Endothelial cell of umbilical vein (primary cell): ENCODE measurements at regions of chr12 and their contacts with region 1.

Region 1: GRCh38 chr12:19572920-19573558 is 133.7 kb downstream of the AEBP2 start:
- DNase-seq: peak; percentile 69
- H3K4me3 ChIP-seq: no peak overlapping the region
- H3K27ac ChIP-seq: peak overlapping the region; percentile 98
- H3K4me1 ChIP-seq: peaks cover 48% of the 10 kb centered on the region
- H3K27me3 ChIP-seq: no peaks in the 10 kb centered on the region
- CTCF ChIP-seq: peak; percentile 45 to 60
- POLR2A ChIP-seq: no peak

Region 2: DNA sequence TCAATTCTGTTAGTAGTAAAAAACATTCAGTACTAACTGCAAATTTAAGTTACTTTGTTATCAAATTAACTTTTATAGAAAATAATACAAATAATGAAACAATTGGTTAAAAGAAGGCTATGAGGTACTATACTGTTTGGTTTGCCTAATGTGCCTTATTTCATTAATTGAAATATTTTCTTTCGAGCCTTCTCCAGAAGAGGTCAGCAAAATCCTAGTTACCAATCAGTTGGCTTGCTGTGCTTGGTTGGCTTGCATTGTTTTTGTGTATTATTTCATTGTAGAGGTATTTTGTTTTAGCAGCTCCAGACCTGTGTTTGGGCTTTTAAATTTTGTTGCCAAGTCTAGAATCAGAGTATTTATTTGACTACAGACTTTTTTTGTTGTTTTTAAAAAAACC is 65.2 kb before region 1 on chr12:
- CTCF ChIA-PET with region 1: interaction called, 17 read pairs
- POLR2A ChIA-PET with region 1: no interaction called
- dilution Hi-C with region 1: no loop called
- intact Hi-C with region 1: loop called (anchors 1 kb)
- DNase-seq: peak; percentile 75
- H3K4me3 ChIP-seq: no peak overlapping the region
- H3K27ac ChIP-seq: no peak overlapping the region
- H3K4me1 ChIP-seq: peaks cover 7% of the 10 kb centered on the region
- H3K27me3 ChIP-seq: no peaks in the 10 kb centered on the region
- CTCF ChIP-seq: peak in 1 of 2 donors; percentile 23
- POLR2A ChIP-seq: no peak

Region 3: DNA sequence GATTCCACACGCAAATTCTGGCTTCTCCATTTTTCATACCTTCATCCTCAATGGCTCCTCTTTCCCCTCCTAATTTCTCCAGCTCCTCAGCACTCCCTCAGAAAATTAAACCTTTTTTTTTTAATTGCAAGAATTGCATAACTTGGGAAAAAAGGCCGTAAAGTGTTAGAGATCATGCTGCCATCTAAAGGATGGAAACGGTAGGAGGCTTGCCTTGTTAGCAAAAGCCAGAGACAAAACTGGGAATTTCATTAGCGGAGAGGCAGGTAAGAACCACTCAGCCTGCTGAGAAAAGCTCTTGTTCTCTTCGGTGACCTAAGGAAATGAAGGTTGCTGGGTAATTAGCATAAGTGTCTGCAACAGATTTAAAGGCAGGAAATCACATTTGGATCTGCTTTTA is 70.6 kb after region 1 on chr12:
- CTCF ChIA-PET with region 1: interaction called, 33 read pairs
- POLR2A ChIA-PET with region 1: no interaction called
- dilution Hi-C with region 1: no loop called
- intact Hi-C with region 1: loop called (anchors 1 kb)
- DNase-seq: peak; percentile 83
- H3K4me3 ChIP-seq: no peak overlapping the region
- H3K27ac ChIP-seq: no peak overlapping the region
- H3K4me1 ChIP-seq: no peaks in the 10 kb centered on the region
- H3K27me3 ChIP-seq: no peaks in the 10 kb centered on the region
- CTCF ChIP-seq: peak; percentile 47 to 64
- POLR2A ChIP-seq: no peak

Region 4: DNA sequence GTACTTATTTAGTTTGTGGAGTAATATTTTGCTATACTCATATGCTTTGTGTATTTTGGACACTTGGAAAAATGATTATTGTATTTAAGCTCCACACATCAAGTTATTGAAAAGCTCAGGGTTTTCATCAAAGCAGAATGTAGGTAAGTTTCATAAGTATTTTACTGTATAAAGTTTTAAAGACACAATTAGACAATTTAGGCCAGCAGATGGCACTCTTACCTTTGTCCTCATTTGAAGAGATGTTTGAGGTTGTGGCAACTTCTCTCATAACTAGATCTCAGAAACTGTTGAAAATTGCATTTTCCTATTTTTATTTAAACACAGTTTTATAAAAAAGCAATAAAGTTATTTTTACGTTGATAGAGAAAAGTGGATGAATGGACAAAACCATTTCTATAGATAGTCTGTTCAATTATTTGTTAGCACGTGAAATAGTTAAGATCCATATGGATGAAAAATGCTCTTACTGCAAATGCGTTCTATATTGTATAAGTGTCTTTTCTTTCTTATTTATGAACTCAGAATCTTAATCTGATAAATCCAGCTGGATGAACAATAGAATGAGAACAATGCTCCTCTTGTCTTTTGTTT is 166.2 kb after region 1 on chr12:
- CTCF ChIA-PET with region 1: interaction called, 16 read pairs
- POLR2A ChIA-PET with region 1: no interaction called
- dilution Hi-C with region 1: no loop called
- intact Hi-C with region 1: loop called (anchors 1 kb)
- DNase-seq: peak; percentile 92
- H3K4me3 ChIP-seq: no peak overlapping the region
- H3K27ac ChIP-seq: peak overlapping the region; percentile 24
- H3K4me1 ChIP-seq: peaks cover 31% of the 10 kb centered on the region
- H3K27me3 ChIP-seq: no peaks in the 10 kb centered on the region
- CTCF ChIP-seq: peak; percentile 25 to 40
- POLR2A ChIP-seq: no peak

Region 5: GRCh38 chr12:19915392-19916195 is 342.6 kb after region 1 on chr12:
- CTCF ChIA-PET with region 1: no interaction called
- POLR2A ChIA-PET with region 1: no interaction called
- dilution Hi-C with region 1: no loop called
- intact Hi-C with region 1: loop called (anchors 5 kb)
- DNase-seq: peak; percentile 85
- H3K4me3 ChIP-seq: no peak overlapping the region
- H3K27ac ChIP-seq: no peak overlapping the region
- H3K4me1 ChIP-seq: peaks cover 5% of the 10 kb centered on the region
- H3K27me3 ChIP-seq: no peaks in the 10 kb centered on the region
- CTCF ChIP-seq: peak; percentile 42 to 48
- POLR2A ChIP-seq: no peak

Region 6: DNA sequence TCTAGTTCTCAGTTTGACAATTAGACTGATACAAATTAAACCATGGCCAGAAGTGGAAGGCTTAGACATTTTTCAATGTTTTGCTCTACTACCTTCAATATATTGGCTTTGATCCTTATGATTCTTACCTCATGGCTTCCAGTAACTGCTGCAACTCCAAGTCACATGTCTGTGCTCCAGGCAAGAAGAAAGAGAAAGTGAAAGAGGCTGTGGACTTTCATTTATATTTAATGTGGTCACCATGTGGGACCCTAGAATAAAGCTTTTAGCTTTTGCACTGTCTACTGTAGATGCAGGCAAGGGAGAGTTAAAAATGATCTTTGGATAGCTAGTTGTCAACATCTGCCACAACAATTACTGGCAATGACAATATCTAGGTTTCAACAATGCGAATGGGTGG is 581.0 kb after region 1 on chr12:
- CTCF ChIA-PET with region 1: no interaction called
- POLR2A ChIA-PET with region 1: no interaction called
- dilution Hi-C with region 1: no loop called
- intact Hi-C with region 1: loop called (anchors 5 kb)
- DNase-seq: no peak
- H3K4me3 ChIP-seq: no peak overlapping the region
- H3K27ac ChIP-seq: no peak overlapping the region
- H3K4me1 ChIP-seq: peaks cover 8% of the 10 kb centered on the region
- H3K27me3 ChIP-seq: no peaks in the 10 kb centered on the region
- CTCF ChIP-seq: no peak
- POLR2A ChIP-seq: no peak

Region 7: GRCh38 chr12:20369305-20370005 is 796.4 kb after region 1 on chr12:
- CTCF ChIA-PET with region 1: no interaction called
- POLR2A ChIA-PET with region 1: no interaction called
- dilution Hi-C with region 1: no loop called
- intact Hi-C with region 1: loop called (anchors 2 kb)
- DNase-seq: peak; percentile 85
- H3K4me3 ChIP-seq: peak overlapping the region; percentile 87 to 99 (median 97)
- H3K27ac ChIP-seq: peak overlapping the region; percentile 75
- H3K4me1 ChIP-seq: peaks cover 28% of the 10 kb centered on the region
- H3K27me3 ChIP-seq: no peaks in the 10 kb centered on the region
- CTCF ChIP-seq: peak in 1 of 2 donors; percentile 23
- POLR2A ChIP-seq: peak; percentile 71